GM18951 (cell line): ENCODE measurements at regions of chr1 and their contacts with region 1.

Region 1: GRCh38 chr1:165592945-165593823 is 37.9 kb upstream of the MGST3 start:
- POLR2A ChIP-seq: no peak

Region 2: GRCh38 chr1:165392634-165393571 is 200.3 kb before region 1 on chr1:
- in situ Hi-C with region 1: loop called (anchors 5 kb)
- POLR2A ChIP-seq: no peak